A673 (cell line): ENCODE measurements at regions of chr16 and their contacts with region 1.

Region 1: GRCh38 chr16:77722309-77723107 is at the start of gene NUDT7:
- DNase-seq: peak; percentile 92
- H3K4me3 ChIP-seq: peak within 1 kb of the TSS; percentile 61
- H3K27ac ChIP-seq: peak within 1 kb of the TSS; percentile 58
- H3K4me1 ChIP-seq: no peaks in the 10 kb centered on the region
- H3K27me3 ChIP-seq: no peaks in the 10 kb centered on the region
- CTCF ChIP-seq: peak; percentile 35; the same call in 1 of the 2 replicates
- total RNA-seq, gene NUDT7: 1.2 and 2.8 TPM in 2 replicates

Region 2: DNA sequence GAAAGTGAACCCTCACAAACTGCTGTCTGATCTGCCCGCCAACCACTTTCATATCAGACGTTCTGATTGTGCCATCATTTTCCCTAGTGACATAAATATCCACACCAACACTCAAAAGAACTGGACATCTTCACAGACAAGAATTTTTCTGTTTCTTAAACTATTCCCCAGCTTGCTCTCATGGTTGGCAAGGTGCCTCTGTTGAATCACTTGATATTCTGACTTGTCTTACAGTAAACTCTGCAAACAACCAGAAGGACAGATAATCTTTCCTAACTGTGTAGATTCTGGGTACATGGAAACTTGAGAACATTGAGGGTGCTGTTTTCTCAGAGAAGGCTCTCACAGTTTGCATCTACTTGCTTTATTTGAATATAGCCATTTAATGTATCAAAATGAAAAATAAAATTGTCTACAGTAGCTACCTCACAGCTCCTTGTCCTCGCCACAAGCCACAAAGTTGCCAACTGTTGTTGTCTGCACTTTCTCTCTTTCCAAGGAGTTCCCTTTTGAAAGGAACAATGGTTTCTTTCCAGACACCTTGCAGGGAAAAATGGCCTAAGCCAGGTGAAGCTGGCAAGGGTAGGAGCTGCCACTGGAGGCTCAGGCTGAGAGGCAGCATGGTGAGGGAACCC is 241.7 kb before region 1 on chr16:
- CTCF ChIA-PET with region 1: no interaction called
- POLR2A ChIA-PET with region 1: no interaction called
- intact Hi-C with region 1: no loop called
- DNase-seq: no peak
- H3K4me3 ChIP-seq: no peak overlapping the region
- H3K27ac ChIP-seq: no peak overlapping the region
- H3K4me1 ChIP-seq: no peaks in the 10 kb centered on the region
- H3K27me3 ChIP-seq: peaks cover 21% of the 10 kb centered on the region
- CTCF ChIP-seq: no peak

Region 3: GRCh38 chr16:77767211-77767610 is 44.7 kb after region 1 on chr16:
- CTCF ChIA-PET with region 1: no interaction called
- POLR2A ChIA-PET with region 1: interaction called, 10 read pairs
- intact Hi-C with region 1: no loop called
- DNase-seq: no peak
- H3K4me3 ChIP-seq: no peak overlapping the region
- H3K27ac ChIP-seq: no peak overlapping the region
- H3K4me1 ChIP-seq: no peaks in the 10 kb centered on the region
- H3K27me3 ChIP-seq: no peaks in the 10 kb centered on the region
- CTCF ChIP-seq: no peak

Region 4: DNA sequence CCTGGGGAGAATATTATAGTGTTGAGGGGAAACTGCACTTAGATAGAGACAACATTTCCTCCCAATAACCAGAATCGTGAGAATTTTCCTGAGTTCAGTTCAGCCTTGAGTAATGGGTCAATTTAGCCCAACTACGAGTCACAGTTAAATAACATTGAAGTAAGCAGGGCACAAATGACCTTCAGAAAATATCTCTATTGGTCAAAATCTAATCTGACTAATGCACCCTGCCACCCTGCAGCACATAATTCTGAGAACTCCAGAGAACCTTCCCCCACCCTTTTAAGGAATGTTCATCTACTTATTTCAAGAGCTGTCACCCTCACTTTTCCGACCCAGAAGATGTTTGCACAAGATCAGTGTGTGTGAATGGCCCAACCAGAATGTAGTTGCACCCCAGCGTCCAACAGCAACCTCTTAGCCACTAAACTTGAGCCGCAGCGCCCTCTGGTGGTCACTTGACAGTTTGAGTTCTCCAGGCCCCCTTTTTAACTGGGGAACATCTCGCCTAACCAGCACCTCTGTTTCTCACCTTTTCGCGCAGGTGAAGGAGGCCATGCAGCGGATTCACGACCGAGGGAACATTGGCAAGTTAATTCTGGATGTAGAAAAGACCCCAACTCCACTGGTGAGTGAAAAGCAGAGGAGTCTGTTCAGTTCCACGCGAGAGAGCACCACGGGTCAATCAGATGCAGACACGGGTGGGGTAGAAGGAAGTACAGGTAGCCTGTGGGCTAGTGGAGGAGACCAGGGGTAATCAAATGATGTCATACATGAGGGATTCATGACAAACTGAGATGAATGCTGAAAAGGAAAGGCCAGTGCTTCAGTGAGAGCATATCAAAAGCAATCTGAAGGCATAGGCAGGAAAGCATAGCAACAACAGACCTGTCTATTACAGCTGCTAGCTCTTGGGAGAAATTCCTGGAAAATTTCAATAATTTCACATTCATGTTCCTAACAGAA is 249.1 kb after region 1 on chr16:
- CTCF ChIA-PET with region 1: no interaction called
- POLR2A ChIA-PET with region 1: no interaction called
- intact Hi-C with region 1: no loop called
- DNase-seq: peak; percentile 72
- H3K4me3 ChIP-seq: no peak overlapping the region
- H3K27ac ChIP-seq: no peak overlapping the region
- H3K4me1 ChIP-seq: no peaks in the 10 kb centered on the region
- H3K27me3 ChIP-seq: no peaks in the 10 kb centered on the region
- CTCF ChIP-seq: peak; percentile 86

Region 5: GRCh38 chr16:78570399-78571141 is 848.1 kb after region 1 on chr16:
- CTCF ChIA-PET with region 1: no interaction called
- POLR2A ChIA-PET with region 1: no interaction called
- intact Hi-C with region 1: no loop called
- DNase-seq: no peak
- H3K4me3 ChIP-seq: no peak overlapping the region
- H3K27ac ChIP-seq: no peak overlapping the region
- H3K4me1 ChIP-seq: no peaks in the 10 kb centered on the region
- H3K27me3 ChIP-seq: no peaks in the 10 kb centered on the region
- CTCF ChIP-seq: no peak